Left ventricle myocardium inferior (tissue), 1 donor: ENCODE measurements at regions of chr17 and their contacts with region 1.

Region 1: DNA sequence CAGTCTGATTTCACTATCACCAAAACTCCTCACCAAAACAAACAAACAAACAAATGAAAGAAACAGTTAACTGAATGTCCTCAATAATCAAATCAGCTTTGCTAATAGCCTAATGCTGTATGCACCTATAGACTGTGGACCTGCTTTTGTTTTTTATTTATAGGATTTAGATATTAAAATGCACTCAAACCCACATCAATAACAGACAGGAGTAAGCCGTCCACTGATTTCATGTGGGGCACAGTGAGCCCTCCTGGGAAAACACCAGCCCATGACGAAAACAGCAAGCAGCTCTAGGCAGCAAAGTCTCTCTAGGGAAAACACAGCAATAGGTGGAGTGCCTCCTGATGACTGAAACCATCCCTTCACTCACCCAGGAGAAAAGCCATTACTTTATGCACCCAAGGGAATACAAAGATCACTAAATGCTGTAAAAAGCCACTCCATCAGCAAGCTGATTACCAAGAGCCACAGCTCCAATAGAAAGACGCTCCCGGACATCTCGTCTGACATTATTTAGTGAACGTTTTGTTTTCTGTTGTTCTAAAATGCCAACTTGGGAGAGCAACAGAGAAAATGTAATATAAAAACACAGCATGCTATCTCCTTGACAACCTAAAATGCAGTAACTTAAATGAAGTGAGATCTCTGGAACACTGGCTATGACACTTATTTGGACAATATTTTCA is 47.8 kb downstream of the ANKFY1 start:
- DNase-seq: no peak
- H3K4me3 ChIP-seq: no peak overlapping the region
- H3K27ac ChIP-seq: peak overlapping the region; percentile 83
- H3K4me1 ChIP-seq: peaks cover 51% of the 10 kb centered on the region
- H3K27me3 ChIP-seq: no peaks in the 10 kb centered on the region
- CTCF ChIP-seq: no peak

Region 2: DNA sequence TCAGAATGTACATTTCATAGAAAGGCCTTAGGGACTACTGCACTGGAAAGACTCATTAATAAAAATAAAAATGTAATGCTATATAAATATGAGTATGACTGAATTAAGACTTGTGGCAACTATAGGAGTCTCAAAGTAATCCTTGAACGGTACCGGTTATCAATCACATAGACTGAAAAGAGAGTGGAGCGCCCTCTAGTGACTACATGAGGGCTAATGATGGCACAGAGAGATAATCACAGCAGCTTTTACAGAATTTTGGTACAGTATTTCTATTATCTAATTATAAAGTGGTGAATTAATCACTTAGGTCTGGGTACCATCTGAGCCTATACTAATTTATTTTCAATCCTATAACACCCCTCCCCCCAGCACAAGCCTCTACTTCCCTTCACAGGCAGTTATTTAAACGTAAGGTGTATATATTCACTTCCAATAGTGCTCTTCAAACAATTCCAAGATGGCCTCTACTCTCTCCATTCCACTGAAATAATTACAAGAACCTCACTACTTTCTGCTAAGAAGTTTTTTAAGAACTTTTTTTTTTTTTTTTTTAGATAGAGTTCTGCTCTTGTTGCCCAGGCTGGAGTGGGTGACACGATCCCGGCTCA is 88.5 kb after region 1 on chr17:
- intact Hi-C with region 1: loop called (anchors 10 kb)
- DNase-seq: no peak
- H3K4me3 ChIP-seq: no peak overlapping the region
- H3K27ac ChIP-seq: no peak overlapping the region
- H3K4me1 ChIP-seq: peaks cover 45% of the 10 kb centered on the region
- H3K27me3 ChIP-seq: no peaks in the 10 kb centered on the region
- CTCF ChIP-seq: peak; percentile 85

Region 3: GRCh38 chr17:4412933-4413831 is 197.2 kb after region 1 on chr17:
- intact Hi-C with region 1: loop called (anchors 5 kb)
- DNase-seq: peak; percentile 91
- H3K4me3 ChIP-seq: no peak overlapping the region
- H3K27ac ChIP-seq: no peak overlapping the region
- H3K4me1 ChIP-seq: peaks cover 6% of the 10 kb centered on the region
- H3K27me3 ChIP-seq: no peaks in the 10 kb centered on the region
- CTCF ChIP-seq: peak; percentile 89